Common myeloid progenitor, CD34-positive (primary cell): ENCODE measurements at regions of chr6 and their contacts with region 1.

Region 1: GRCh38 chr6:133916650-133917151 is 27.8 kb downstream of the TCF21 start:
- DNase-seq: peak; percentile 72 to 76 (median 73)
- H3K4me3 ChIP-seq: peak overlapping the region in 4 of 7 experiments; percentile 20 to 46 (median 25)
- H3K27ac ChIP-seq: no peak overlapping the region
- H3K4me1 ChIP-seq: peaks cover 0 to 11% (median 5%) of the 10 kb centered on the region in 4 experiments
- H3K27me3 ChIP-seq: peaks cover 3 to 27% (median 12%) of the 10 kb centered on the region in 5 experiments

Region 2: GRCh38 chr6:133568970-133569889 is 347.5 kb before region 1 on chr6:
- CTCF ChIA-PET with region 1: interaction called, 29 read pairs
- POLR2A ChIA-PET with region 1: no interaction called
- DNase-seq: peak; percentile 19 to 62 (median 51)
- H3K4me3 ChIP-seq: peak overlapping the region in 2 of 7 experiments; percentile 16 to 52
- H3K27ac ChIP-seq: no peak overlapping the region
- H3K4me1 ChIP-seq: peaks cover 0 to 5% (median 1%) of the 10 kb centered on the region in 4 experiments
- H3K27me3 ChIP-seq: peaks cover 12 to 52% (median 17%) of the 10 kb centered on the region in 5 experiments

Region 3: GRCh38 chr6:133898263-133898662 is 18.4 kb before region 1 on chr6:
- CTCF ChIA-PET with region 1: interaction called, 18 read pairs
- POLR2A ChIA-PET with region 1: no interaction called
- DNase-seq: no peak
- H3K4me3 ChIP-seq: no peak overlapping the region
- H3K27ac ChIP-seq: no peak overlapping the region
- H3K4me1 ChIP-seq: no peaks in the 10 kb centered on the region
- H3K27me3 ChIP-seq: peaks cover 34 to 93% (median 50%) of the 10 kb centered on the region in 5 experiments

Region 4: DNA sequence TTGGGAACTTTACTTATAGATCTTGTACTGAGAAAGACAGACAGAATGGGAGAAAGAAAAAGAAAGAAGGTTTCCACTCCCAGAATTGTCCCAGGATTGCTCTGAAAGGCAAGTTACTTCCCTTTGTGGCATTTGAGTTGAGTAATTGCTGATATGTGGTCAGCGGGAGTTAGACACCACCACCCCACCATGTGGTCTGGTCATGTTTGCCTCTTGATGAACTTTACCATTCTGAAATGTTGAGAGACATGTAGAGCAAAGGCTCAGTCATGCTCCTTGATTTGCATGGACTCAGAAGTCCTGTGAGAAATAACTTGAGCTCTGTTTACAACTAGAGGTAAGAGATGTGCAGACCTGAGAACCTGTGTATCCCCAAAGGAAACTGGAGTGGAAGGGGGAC is 10.7 kb before region 1 on chr6:
- CTCF ChIA-PET with region 1: interaction called, 43 read pairs
- POLR2A ChIA-PET with region 1: no interaction called
- DNase-seq: peak in 2 of 3 donors; percentile 34 to 36
- H3K4me3 ChIP-seq: no peak overlapping the region
- H3K27ac ChIP-seq: no peak overlapping the region
- H3K4me1 ChIP-seq: no peaks in the 10 kb centered on the region
- H3K27me3 ChIP-seq: peaks cover 13 to 71% (median 27%) of the 10 kb centered on the region in 5 experiments